ENCODE measurements at regions of chr11 and their contacts with region 1.

Region 1: GRCh38 chr11:125345421-125346178 is 150.5 kb downstream of the FEZ1 start:
- DNase-seq: peak; percentile 44 to 45
- H3K4me3 ChIP-seq: no peak overlapping the region
- H3K27ac ChIP-seq: no peak overlapping the region
- H3K4me1 ChIP-seq: no peaks in the 10 kb centered on the region
- H3K27me3 ChIP-seq: no peaks in the 10 kb centered on the region
- CTCF ChIP-seq: peak; percentile 87

Region 2: GRCh38 chr11:125091247-125091876 is 254.2 kb before region 1 on chr11:
- CTCF ChIA-PET with region 1: no interaction called
- POLR2A ChIA-PET with region 1: no interaction called
- intact Hi-C with region 1: loop called (anchors 1 kb)
- DNase-seq: peak; percentile 36 to 95
- H3K4me3 ChIP-seq: no peak overlapping the region; the same call in 1 of the 2 replicates
- H3K27ac ChIP-seq: peak overlapping the region; percentile 70
- H3K4me1 ChIP-seq: peaks cover 29% of the 10 kb centered on the region
- H3K27me3 ChIP-seq: no peaks in the 10 kb centered on the region
- CTCF ChIP-seq: peak; percentile 72

Region 3: GRCh38 chr11:125164422-125165110 is 181.0 kb before region 1 on chr11 and contains the start of gene PKNOX2:
- CTCF ChIA-PET with region 1: interaction called, 3 read pairs
- POLR2A ChIA-PET with region 1: no interaction called
- intact Hi-C with region 1: loop called (anchors 10 kb)
- DNase-seq: peak in 1 of 2 experiments; percentile 40
- H3K4me3 ChIP-seq: peak within 1 kb of the TSS; percentile 42; the same call in 1 of the 2 replicates
- H3K27ac ChIP-seq: no peak within 1 kb of the TSS
- H3K4me1 ChIP-seq: no peaks in the 10 kb centered on the region
- H3K27me3 ChIP-seq: peaks cover 17% of the 10 kb centered on the region
- CTCF ChIP-seq: 0 out of 2 replicates have a peak, but pooled peaks have one; percentile 34
- total RNA-seq, gene PKNOX2: not detected in 2 replicates

Region 4: DNA sequence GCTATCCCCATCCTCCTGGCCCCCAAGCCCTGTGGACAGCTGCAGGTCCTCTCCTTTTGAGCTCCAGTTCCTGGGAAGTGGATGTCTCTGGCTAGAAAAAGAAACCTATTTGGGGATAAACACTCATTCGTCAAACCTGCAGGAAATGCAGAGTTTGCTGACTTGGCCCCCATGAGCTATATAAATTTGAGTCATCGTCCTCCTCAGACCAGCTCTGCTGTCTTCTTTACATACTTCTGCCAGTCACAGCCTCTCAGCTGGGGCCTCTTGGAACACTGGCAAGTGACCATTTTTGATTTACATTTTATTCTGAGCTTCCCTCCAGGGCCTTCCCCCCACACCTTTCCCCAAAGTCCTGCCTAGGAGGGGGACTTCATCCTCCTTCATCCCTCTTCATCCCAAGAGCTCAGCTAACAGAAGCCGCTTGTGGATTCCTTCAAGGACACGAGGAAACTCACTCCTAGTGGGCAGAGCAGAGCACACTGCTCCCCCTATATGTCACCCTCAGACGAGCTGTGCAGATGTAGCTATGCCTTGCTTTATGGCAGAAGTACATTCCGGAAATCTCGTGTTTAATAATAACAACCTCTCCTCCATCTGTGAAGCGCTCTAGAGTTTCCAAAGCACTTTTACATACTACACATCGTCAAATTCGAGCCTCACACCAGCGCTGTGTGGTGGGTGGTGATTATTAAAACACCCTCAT is 18.7 kb after region 1 on chr11:
- CTCF ChIA-PET with region 1: no interaction called
- POLR2A ChIA-PET with region 1: no interaction called
- intact Hi-C with region 1: no loop called
- DNase-seq: no peak
- H3K4me3 ChIP-seq: no peak overlapping the region
- H3K27ac ChIP-seq: no peak overlapping the region
- H3K4me1 ChIP-seq: no peaks in the 10 kb centered on the region
- H3K27me3 ChIP-seq: peaks cover 36% of the 10 kb centered on the region; the same call in 1 of the 2 replicates
- CTCF ChIP-seq: no peak

Measured in PC-9 (cell line).